Right ventricle myocardium superior (tissue), 1 donor: ENCODE measurements at regions of chr16 and their contacts with region 1.

Region 1: DNA sequence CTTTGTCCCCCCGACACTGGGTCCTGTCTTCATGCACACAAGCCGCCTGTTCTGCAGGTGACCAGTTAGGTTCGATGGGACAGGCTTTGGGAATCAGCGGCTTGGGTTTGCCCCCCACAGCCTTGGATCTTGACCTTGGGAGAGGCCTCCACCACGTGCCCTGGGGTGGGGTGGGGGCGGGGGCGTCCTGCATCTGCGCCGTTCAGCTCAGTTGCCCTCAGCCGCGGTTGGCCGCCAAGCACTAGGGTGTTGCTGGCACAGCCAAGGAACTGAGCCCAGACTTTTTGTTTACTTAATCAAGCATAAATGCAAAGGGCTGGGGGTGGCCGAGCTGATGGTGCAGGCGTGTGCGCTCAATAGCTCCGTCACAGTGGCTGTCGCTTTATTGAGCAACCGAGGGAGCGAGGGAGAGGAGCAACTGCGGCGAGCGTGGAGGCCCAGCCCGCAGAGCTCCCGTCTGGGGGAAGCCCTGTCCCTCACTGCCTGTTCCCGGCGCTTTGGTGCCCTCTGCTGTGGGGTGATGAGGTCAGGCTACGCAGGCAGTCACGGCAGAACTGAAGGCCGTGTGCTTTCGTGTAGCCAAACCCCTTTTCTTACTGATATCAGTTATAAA is 33.9 kb downstream of the JPH3 start:
- DNase-seq: peak; percentile 92
- ATAC-seq: peak; percentile 98

Region 2: DNA sequence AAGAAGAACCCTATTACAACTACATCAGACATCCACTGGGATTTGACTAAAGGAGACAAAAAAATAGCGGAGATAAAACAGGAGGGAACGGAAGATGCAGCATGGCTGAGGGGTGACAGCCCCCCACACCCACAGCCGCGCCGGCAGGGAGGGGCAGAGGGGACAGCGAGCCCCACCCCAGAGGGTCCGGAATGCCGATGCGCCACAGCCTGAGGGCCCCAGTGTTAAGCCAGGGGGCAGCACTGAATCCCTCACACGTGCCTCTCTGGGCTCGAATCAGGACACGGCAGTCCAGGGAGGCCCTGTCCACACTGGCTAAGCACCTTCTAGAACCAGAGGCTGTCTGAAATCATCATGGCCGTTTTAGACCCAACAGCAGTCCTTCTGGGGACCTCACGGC is 225.2 kb before region 1 on chr16:
- intact Hi-C with region 1: loop called (anchors 5 kb)
- DNase-seq: no peak
- ATAC-seq: no peak

Region 3: DNA sequence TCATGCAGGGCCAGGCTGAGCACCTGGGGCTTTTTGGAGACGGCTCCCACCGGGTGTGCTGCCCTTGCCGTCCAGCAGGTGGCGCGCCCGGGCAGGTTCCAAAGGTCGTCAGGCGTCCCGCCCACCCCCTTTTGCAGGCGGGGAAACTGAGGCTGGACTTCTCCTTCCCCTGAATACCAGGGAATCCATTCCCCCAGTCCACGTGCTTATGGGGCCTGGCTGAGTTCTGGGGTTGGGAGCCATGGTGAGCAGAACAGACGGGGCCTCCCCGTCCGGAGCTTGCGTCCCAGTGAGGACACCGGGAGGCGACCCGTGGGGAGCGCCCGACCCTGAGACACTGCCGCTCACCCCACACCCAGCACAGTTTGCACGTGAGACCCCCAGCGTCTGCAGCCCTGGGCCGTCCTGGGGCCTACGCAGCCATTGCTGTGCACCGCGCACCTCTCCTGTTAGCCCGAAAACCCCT is 85.6 kb before region 1 on chr16:
- intact Hi-C with region 1: loop called (anchors 10 kb)
- DNase-seq: peak; percentile 71
- ATAC-seq: peak; percentile 57

Region 4: GRCh38 chr16:87586201-87586782 is 49.9 kb before region 1 on chr16:
- intact Hi-C with region 1: loop called (anchors 2 kb)
- DNase-seq: no peak
- ATAC-seq: no peak

Region 5: GRCh38 chr16:88737298-88738150 is 1101.3 kb after region 1 on chr16:
- intact Hi-C with region 1: no loop called
- DNase-seq: peak; percentile 88
- ATAC-seq: peak; percentile 87